WTC11 (cell line): ENCODE measurements at regions of chr21 and their contacts with region 1.

Region 1: DNA sequence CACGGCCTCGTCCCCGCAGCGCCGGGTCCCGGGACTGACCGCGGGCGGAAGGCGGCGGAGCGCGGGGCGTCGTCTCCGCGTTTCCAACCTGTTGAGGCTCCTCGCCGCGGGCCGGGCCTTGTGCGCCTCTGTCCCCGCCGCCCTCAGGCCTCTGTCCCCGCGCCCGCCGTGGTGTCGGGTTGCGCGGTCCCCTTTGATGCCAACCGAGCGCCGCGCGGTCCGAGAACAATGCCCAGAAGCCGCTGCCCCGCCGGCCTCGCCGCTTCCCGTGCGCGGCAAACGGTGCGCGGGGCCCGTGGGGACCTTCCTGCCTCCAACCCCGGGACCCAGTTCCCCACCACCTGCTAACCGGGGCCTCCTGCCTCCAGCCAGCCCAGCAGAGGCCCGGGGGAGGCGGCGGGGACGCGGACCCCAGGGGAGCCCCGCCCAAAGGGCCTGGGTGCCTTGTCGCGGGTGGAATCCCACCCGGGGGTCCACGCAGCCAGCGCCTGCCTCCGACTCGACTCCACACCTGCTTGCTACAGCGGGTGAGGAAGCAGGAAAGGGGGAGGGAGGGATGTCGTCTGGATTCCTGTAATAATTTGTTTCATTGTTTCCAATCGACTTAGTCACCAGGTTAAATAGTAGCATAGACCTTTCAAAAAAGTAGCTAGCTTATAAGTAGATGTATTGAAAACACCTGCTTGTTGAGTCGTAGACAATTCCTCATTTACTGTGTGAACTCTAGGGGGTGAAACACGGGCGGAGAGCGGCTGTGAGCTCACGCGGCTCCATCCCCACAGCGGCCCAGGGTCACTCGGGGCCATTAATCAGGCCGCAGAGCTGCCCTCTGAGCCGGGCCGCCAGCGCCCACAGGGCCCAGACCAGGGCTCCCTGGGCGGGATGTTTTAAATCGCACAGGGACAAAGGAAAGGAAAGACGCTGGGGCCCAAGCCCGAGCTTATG is 1.1 kb downstream of the COL18A1 start:
- DNase-seq: peak; percentile 66
- ATAC-seq: no peak
- H3K4me3 Mint-ChIP-seq: peak overlapping the region; percentile 77
- H3K27ac Mint-ChIP-seq: peak overlapping the region; percentile 98
- H3K4me1 Mint-ChIP-seq: peaks cover 56% of the 10 kb centered on the region
- H3K27me3 Mint-ChIP-seq: peaks cover 26% of the 10 kb centered on the region
- CTCF ChIP-seq: no peak

Region 2: DNA sequence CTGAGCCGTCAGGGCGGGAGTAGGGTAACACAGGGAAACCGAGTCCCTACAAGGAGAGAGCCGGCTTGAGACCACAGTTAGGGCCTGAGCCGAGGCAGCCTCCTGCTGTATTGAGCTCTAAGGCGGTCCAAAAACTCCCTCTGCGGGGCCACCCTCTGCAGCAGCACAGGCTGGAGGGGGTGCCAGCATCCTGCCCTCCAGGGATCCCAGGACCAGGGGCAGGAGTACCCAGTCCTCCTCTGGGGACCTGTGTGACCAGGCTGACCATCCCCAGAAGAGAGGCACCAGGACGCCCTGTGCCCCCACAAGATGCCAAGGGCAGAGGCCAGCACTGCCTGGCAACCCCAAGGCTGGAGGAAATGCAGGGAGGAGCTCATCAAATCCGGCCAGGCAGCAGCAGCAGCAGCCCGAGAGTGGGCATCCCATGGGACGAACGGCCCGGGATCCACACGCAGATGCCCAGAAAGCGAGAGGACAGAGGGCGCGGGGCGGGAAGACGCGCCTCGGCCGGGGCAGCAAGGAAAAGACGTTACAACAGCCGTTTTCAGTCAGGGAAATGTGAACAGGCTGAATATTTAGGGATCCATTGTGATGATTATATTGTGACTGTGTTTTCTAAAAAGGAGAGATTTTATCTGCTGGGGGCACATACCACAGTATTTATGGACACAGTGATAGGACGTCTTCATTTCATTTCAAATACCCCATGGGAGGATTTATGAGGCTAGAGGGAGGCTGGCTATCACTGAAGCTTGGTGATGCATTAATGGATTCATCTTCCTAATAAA is 58.2 kb before region 1 on chr21:
- CTCF ChIA-PET with region 1: interaction called, 11 read pairs
- POLR2A ChIA-PET with region 1: no interaction called
- DNase-seq: no peak
- ATAC-seq: peak; percentile 17; the same call in 1 of the 2 replicates
- H3K4me3 Mint-ChIP-seq: no peak overlapping the region
- H3K27ac Mint-ChIP-seq: no peak overlapping the region
- H3K4me1 Mint-ChIP-seq: no peaks in the 10 kb centered on the region
- H3K27me3 Mint-ChIP-seq: peaks cover 9% of the 10 kb centered on the region
- CTCF ChIP-seq: no peak

Region 3: GRCh38 chr21:45357436-45358260 is 48.4 kb before region 1 on chr21:
- CTCF ChIA-PET with region 1: interaction called, 23 read pairs
- POLR2A ChIA-PET with region 1: no interaction called
- DNase-seq: no peak
- ATAC-seq: peak; percentile 38
- H3K4me3 Mint-ChIP-seq: no peak overlapping the region
- H3K27ac Mint-ChIP-seq: no peak overlapping the region; the same call in 1 of the 2 replicates
- H3K4me1 Mint-ChIP-seq: peaks cover 35% of the 10 kb centered on the region
- H3K27me3 Mint-ChIP-seq: no peaks in the 10 kb centered on the region
- CTCF ChIP-seq: no peak

Region 4: DNA sequence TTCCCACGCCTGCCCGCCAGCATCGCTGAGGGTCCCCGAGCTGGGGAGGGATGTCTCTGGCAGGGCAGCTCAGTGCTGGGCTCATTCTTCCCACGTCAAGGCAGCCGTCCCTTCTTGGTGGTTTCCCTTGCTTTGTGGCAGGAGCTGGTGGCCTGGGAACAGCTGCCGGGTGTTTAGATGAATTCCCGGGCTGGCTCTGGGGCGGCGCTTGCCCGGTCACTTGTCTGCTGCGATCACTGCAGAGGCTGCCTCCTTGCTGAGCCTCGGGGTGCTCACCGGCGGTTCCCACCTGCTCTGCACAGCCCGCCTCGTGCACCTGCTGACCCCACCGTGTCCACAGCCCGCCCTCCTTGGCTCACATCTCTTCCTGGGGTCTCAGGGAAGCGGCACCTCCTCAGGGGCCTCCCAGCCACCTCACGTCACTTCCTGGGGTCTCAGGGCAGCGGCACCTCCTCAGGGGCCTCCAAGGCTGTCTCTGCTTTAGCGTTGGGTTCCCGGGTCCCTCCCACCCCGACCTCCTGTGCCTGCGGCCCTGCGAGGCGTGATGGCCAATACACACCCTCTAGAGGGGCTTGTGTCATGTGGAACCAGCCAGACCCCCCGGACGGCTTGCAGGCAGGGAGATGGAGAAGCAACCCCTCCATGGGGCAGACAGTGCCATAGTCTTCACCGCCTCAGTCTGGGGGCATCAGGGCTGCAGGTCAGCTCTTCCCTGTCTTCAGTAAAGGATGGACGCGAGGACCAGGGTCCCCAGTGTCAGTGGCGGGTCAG is 12.4 kb after region 1 on chr21:
- CTCF ChIA-PET with region 1: interaction called, 16 read pairs
- POLR2A ChIA-PET with region 1: no interaction called
- DNase-seq: peak; percentile 9
- ATAC-seq: no peak
- H3K4me3 Mint-ChIP-seq: no peak overlapping the region
- H3K27ac Mint-ChIP-seq: peak overlapping the region; percentile 87
- H3K4me1 Mint-ChIP-seq: peaks cover 47% of the 10 kb centered on the region
- H3K27me3 Mint-ChIP-seq: no peaks in the 10 kb centered on the region
- CTCF ChIP-seq: no peak

Region 5: GRCh38 chr21:45427331-45428271 is 21.5 kb after region 1 on chr21:
- CTCF ChIA-PET with region 1: interaction called, 11 read pairs
- POLR2A ChIA-PET with region 1: interaction called, 3 read pairs
- DNase-seq: peak; percentile 66
- ATAC-seq: peak; percentile 46
- H3K4me3 Mint-ChIP-seq: no peak overlapping the region
- H3K27ac Mint-ChIP-seq: peak overlapping the region; percentile 70
- H3K4me1 Mint-ChIP-seq: peaks cover 41% of the 10 kb centered on the region
- H3K27me3 Mint-ChIP-seq: no peaks in the 10 kb centered on the region
- CTCF ChIP-seq: no peak